IMR-90 (cell line): ENCODE measurements at regions of chr12 and their contacts with region 1.

Region 1: DNA sequence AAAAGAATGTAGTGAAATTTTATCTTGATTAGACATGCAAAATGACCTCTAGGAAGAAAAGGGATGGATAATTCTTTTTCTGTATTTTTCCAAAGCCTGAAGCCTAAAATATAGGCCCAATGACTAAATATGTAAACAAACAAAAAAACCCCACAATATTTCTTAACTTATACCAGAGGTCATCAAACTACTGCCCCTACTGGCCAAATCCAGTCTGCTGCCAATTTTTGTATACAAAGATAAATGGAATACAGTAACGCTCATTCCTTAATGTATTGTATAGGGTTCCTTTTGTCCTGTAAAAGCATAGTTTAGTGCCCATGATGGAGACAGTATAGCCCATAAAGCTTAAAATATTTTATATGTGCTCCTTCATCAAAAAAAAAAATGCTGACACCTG is 145.7 kb upstream of the ALG10 start:
- DNase-seq: no peak
- ATAC-seq: no peak
- H3K4me3 ChIP-seq: no peak overlapping the region
- H3K27ac ChIP-seq: no peak overlapping the region
- H3K4me1 ChIP-seq: no peaks in the 10 kb centered on the region
- H3K27me3 ChIP-seq: no peaks in the 10 kb centered on the region
- CTCF ChIP-seq: no peak
- POLR2A ChIP-seq: no peak
- RAD21 ChIP-seq: no peak

Region 2: DNA sequence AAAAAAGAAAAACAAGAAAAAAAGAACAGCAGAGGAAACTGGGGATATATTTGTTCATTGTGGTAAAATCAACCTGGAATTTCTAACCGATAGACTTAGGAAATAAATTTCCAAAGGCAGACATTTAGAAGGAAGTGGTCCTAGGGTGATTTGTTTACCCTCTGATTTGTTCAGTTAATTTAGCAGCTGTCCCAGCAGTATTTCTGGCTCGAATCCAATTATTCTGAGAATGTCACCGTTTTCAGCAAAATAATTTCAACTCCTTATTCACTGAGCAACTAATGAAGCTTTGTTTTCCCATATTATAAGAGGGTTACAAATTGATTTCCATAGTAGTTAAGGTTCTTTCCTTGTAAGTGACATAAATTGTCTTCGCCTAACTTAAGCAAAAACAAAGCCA is 151.8 kb before region 1 on chr12:
- CTCF ChIA-PET with region 1: no interaction called
- POLR2A ChIA-PET with region 1: no interaction called
- dilution Hi-C with region 1: no loop called
- in situ Hi-C with region 1: loop called (anchors 25 kb)
- intact Hi-C with region 1: no loop called
- DNase-seq: no peak
- ATAC-seq: no peak
- H3K4me3 ChIP-seq: no peak overlapping the region
- H3K27ac ChIP-seq: no peak overlapping the region
- H3K4me1 ChIP-seq: no peaks in the 10 kb centered on the region
- H3K27me3 ChIP-seq: no peaks in the 10 kb centered on the region
- CTCF ChIP-seq: no peak
- POLR2A ChIP-seq: no peak
- RAD21 ChIP-seq: no peak

Region 3: GRCh38 chr12:33967760-33968159 is 91.1 kb after region 1 on chr12:
- CTCF ChIA-PET with region 1: no interaction called
- POLR2A ChIA-PET with region 1: no interaction called
- dilution Hi-C with region 1: no loop called
- in situ Hi-C with region 1: no loop called
- intact Hi-C with region 1: no loop called
- DNase-seq: no peak
- ATAC-seq: no peak
- H3K4me3 ChIP-seq: no peak overlapping the region
- H3K27ac ChIP-seq: no peak overlapping the region
- H3K4me1 ChIP-seq: no peaks in the 10 kb centered on the region
- H3K27me3 ChIP-seq: no peaks in the 10 kb centered on the region
- CTCF ChIP-seq: no peak
- POLR2A ChIP-seq: no peak
- RAD21 ChIP-seq: no peak